Caco-2 (cell line): ENCODE measurements at regions of chr11 and their contacts with region 1.

Region 1: GRCh38 chr11:133134314-133135173 is 397.8 kb downstream of the OPCML start:
- DNase-seq: peak; percentile 71 to 74
- H3K4me3 ChIP-seq: no peak overlapping the region
- H3K4me3 Mint-ChIP-seq: no peak overlapping the region
- H3K27ac Mint-ChIP-seq: no peak overlapping the region
- H3K4me1 ChIP-seq: no peaks in the 10 kb centered on the region
- H3K4me1 Mint-ChIP-seq: no peaks in the 10 kb centered on the region
- H3K27me3 ChIP-seq: no peaks in the 10 kb centered on the region
- H3K27me3 Mint-ChIP-seq: no peaks in the 10 kb centered on the region
- CTCF ChIP-seq: peak; percentile 89 to 95

Region 2: DNA sequence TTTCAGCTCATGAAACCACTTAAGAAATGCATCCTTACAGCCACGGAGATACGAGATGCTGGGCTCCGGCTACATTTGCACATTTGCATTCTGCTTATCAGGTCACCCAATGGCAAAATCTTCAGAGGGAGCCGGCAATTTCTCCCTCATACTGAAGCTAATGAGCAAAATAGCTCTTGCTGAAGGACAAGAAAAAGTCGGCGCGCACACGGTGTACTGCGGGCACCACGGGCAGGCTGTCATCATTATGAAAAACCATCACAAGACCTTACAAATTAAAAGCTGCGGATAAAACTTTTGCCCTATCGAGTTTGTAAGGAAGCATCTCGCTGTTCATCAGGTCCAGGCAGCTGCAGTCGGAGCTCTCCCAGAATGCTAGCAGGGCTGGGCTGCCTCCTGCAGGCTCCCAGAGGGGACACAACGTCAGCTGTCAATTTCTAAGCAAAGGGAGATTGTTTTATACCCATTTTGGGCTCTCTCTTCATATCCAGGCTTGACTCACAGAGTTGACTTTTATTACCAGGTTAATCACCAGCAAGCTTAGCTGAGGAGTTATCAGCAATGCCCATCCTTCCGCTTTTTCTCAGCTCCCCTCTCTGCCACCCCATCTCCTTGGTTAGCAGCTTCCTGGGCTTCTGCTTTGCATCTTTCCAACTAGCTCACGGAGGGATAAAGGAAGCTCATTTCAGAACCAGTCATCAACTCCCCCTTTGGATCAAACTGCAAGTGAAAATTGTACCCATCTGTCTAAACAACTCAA is 22.6 kb after region 1 on chr11:
- CTCF ChIA-PET with region 1: interaction called, 17 read pairs
- POLR2A ChIA-PET with region 1: no interaction called
- intact Hi-C with region 1: no loop called
- DNase-seq: no peak
- H3K4me3 ChIP-seq: no peak overlapping the region
- H3K4me3 Mint-ChIP-seq: no peak overlapping the region
- H3K27ac Mint-ChIP-seq: no peak overlapping the region
- H3K4me1 ChIP-seq: peaks cover 21% of the 10 kb centered on the region
- H3K4me1 Mint-ChIP-seq: peaks cover 28% of the 10 kb centered on the region
- H3K27me3 ChIP-seq: no peaks in the 10 kb centered on the region
- H3K27me3 Mint-ChIP-seq: no peaks in the 10 kb centered on the region
- CTCF ChIP-seq: no peak

Region 3: GRCh38 chr11:133230431-133230830 is 95.9 kb after region 1 on chr11:
- CTCF ChIA-PET with region 1: no interaction called
- POLR2A ChIA-PET with region 1: no interaction called
- intact Hi-C with region 1: loop called (anchors 1 kb)
- DNase-seq: peak; percentile 72 to 86
- H3K4me3 ChIP-seq: no peak overlapping the region
- H3K4me3 Mint-ChIP-seq: peak overlapping the region; percentile 29
- H3K27ac Mint-ChIP-seq: peak overlapping the region; percentile 87
- H3K4me1 ChIP-seq: peaks cover 36% of the 10 kb centered on the region
- H3K4me1 Mint-ChIP-seq: peaks cover 12% of the 10 kb centered on the region
- H3K27me3 ChIP-seq: no peaks in the 10 kb centered on the region
- H3K27me3 Mint-ChIP-seq: no peaks in the 10 kb centered on the region
- CTCF ChIP-seq: no peak

Region 4: GRCh38 chr11:133366099-133366498 is 231.6 kb after region 1 on chr11:
- CTCF ChIA-PET with region 1: no interaction called
- POLR2A ChIA-PET with region 1: no interaction called
- intact Hi-C with region 1: no loop called
- DNase-seq: no peak
- H3K4me3 ChIP-seq: no peak overlapping the region
- H3K4me3 Mint-ChIP-seq: no peak overlapping the region
- H3K27ac Mint-ChIP-seq: no peak overlapping the region
- H3K4me1 ChIP-seq: no peaks in the 10 kb centered on the region
- H3K4me1 Mint-ChIP-seq: no peaks in the 10 kb centered on the region
- H3K27me3 ChIP-seq: no peaks in the 10 kb centered on the region
- H3K27me3 Mint-ChIP-seq: peaks cover 8% of the 10 kb centered on the region
- CTCF ChIP-seq: no peak

Region 5: DNA sequence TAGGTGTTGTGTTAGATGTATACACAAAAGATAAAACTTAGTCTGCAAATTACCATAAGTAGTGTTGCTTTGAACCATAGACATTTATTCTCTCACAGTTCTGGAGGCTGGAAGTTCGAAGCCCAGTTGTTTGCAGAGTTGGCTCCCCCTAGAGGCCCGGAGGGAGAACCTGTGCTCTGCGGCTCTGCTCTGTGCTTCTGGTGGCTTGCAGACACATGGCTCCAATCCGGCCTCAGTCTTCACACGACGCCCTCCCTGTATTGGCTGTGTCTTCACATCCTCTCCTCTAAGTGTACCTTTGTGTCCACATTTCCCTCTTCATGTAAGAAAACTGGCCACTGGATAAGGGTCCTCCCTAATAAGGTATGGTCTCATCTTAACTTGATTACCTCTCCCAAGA is 269.4 kb after region 1 on chr11:
- CTCF ChIA-PET with region 1: no interaction called
- POLR2A ChIA-PET with region 1: no interaction called
- intact Hi-C with region 1: loop called (anchors 1 kb)
- DNase-seq: peak in 1 of 2 experiments; percentile 35
- H3K4me3 ChIP-seq: no peak overlapping the region
- H3K4me3 Mint-ChIP-seq: no peak overlapping the region
- H3K27ac Mint-ChIP-seq: no peak overlapping the region
- H3K4me1 ChIP-seq: no peaks in the 10 kb centered on the region
- H3K4me1 Mint-ChIP-seq: no peaks in the 10 kb centered on the region
- H3K27me3 ChIP-seq: no peaks in the 10 kb centered on the region
- H3K27me3 Mint-ChIP-seq: peaks cover 8% of the 10 kb centered on the region
- CTCF ChIP-seq: peak; percentile 42 to 53

Region 6: DNA sequence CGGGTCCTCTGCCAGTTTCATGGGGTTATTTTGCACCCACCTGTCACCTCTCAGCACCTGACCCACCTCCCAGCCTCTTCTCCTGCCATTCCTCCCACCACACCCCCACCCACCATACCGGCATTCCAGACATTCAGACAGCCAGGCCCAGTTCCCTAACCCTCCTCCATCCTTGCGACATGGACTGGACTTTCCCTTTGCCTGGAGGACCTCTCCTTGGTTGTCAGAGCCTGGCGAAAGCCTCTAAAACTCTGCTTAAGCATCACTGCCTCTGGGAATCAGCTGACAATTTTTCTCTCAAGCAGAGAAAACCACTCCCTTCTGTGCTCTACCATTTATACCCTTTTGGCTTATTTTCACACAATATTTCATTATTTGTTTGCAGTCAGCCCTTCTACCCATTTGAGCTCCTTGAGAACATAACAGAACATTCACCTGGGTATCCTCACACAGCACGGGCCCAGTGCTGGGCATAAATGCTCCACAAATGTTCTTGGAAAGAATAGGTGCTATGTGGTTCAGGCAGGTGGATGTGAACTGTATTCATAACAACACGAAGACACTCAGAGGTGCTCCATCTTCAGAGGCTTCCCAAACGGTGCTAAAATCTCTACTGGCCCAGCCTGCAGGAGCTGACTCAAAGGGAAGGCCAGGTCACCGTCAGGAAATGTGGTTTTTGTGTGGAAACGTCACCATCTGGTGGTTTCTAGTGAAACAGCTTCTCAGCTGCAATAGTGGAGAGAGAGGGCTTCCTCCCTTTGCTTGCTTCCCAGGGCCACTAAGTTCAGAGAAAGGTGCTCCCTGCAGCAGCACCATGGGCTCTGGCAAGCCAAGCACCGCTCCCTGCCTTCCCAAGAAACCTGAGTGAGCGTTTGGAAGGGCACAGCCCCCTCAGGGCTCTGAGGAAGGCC is 700.4 kb after region 1 on chr11:
- CTCF ChIA-PET with region 1: interaction called, 22 read pairs
- POLR2A ChIA-PET with region 1: no interaction called
- intact Hi-C with region 1: loop called (anchors 1 kb)
- DNase-seq: peak; percentile 75 to 76
- H3K4me3 ChIP-seq: no peak overlapping the region
- H3K4me3 Mint-ChIP-seq: no peak overlapping the region
- H3K27ac Mint-ChIP-seq: peak overlapping the region; percentile 27
- H3K4me1 ChIP-seq: no peaks in the 10 kb centered on the region
- H3K4me1 Mint-ChIP-seq: no peaks in the 10 kb centered on the region
- H3K27me3 ChIP-seq: no peaks in the 10 kb centered on the region
- H3K27me3 Mint-ChIP-seq: peaks cover 3% of the 10 kb centered on the region
- CTCF ChIP-seq: peak; percentile 78 to 81